CD14-positive monocyte (primary cell): ENCODE measurements at regions of chr15 and their contacts with region 1.

Region 1: DNA sequence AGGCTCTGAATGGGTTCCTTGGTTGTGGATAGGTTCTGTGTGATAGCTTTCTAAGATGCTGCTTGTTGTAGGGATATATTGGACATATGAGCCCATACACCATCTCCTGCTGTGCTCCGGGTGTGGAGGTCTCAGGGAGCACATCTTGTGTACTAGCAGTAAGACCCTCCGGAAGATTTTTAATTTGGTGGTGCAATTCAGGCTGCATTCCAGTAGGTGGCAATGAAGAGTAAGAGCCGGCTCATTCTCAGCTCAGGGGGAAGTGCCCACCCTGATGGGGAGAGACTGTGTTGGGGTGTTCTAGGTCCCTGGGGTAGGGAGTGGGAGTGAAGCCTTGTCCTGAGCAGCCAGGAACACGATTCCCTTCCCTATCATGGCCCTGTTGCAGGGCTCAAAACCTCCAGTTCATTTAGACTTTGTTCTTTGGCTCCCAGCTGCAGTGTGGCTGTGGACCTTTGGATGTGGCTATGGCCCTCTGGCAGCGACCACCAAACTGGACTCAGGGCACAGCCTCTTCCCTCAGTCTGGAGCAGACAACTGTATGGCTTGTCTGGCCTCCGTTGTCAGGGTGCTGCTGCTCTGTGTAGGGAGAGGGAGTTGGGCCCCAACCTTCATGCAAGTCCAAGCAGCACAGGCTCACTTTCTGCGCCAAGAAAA is 104.7 kb downstream of the UNC13C start:
- DNase-seq: peak in 1 of 3 donors; percentile 4
- H3K4me3 ChIP-seq: no peak overlapping the region
- H3K4me3 Mint-ChIP-seq: no peak overlapping the region
- H3K27ac ChIP-seq: no peak overlapping the region
- H3K27ac Mint-ChIP-seq: no peak overlapping the region
- H3K4me1 ChIP-seq: no peaks in the 10 kb centered on the region
- H3K4me1 Mint-ChIP-seq: no peaks in the 10 kb centered on the region
- H3K27me3 ChIP-seq: no peaks in the 10 kb centered on the region
- H3K27me3 Mint-ChIP-seq: peaks cover 0 to 2% (median 0%) of the 10 kb centered on the region in 3 donors
- CTCF ChIP-seq: peak; percentile 76

Region 2: DNA sequence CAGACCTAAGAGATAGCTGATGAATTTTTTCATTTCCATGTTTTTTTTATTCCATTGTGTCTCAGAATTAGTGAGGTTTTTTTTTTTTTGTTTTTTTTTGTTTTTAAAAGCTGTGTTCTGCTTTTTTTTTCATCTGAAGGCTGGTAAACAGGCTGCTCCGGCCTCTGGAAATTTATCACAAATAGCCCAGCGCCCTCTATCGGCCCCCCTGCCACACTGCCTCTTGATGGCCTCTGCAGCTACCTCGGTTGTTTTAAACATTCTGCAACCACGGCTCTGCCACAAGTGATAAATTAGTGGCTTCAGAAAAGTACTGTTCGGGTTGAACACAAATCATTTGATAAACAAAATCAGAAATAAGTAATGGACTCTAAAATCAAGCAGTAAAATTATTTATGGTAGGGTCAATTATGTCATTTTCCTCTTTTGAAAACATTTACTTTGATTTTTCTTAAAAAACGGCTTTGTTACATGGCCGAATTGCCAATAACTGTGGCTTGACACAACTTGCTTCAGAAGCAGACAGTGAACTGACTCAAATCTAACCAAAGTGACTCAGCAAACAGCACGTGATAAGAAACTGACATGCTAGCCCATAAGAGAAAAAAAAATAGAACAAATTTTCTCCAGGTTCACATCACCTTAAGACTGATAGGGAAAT is 1026.0 kb after region 1 on chr15:
- intact Hi-C with region 1: loop called in 1 of 2 experiments (anchors 10 kb)
- DNase-seq: peak; percentile 14 to 48 (median 37)
- H3K4me3 ChIP-seq: no peak overlapping the region
- H3K4me3 Mint-ChIP-seq: no peak overlapping the region
- H3K27ac ChIP-seq: no peak overlapping the region
- H3K27ac Mint-ChIP-seq: no peak overlapping the region
- H3K4me1 ChIP-seq: no peaks in the 10 kb centered on the region
- H3K4me1 Mint-ChIP-seq: peaks cover 5% of the 10 kb centered on the region
- H3K27me3 ChIP-seq: no peaks in the 10 kb centered on the region
- H3K27me3 Mint-ChIP-seq: peaks cover 0 to 3% (median 1%) of the 10 kb centered on the region in 3 donors
- CTCF ChIP-seq: peak; percentile 76